ENCODE measurements at regions of chr18 and their contacts with region 1.

Region 1: GRCh38 chr18:67583621-67584020 is 67.1 kb upstream of the DSEL start:
- DNase-seq: no peak
- H3K4me3 ChIP-seq: no peak overlapping the region
- H3K27ac ChIP-seq: no peak overlapping the region
- H3K4me1 ChIP-seq: no peaks in the 10 kb centered on the region
- H3K27me3 ChIP-seq: no peaks in the 10 kb centered on the region
- CTCF ChIP-seq: no peak

Region 2: GRCh38 chr18:67282796-67283195 is 300.8 kb before region 1 on chr18:
- CTCF ChIA-PET with region 1: no interaction called
- POLR2A ChIA-PET with region 1: no interaction called
- intact Hi-C with region 1: no loop called
- DNase-seq: no peak
- H3K4me3 ChIP-seq: no peak overlapping the region
- H3K27ac ChIP-seq: no peak overlapping the region
- H3K4me1 ChIP-seq: peaks cover 6% of the 10 kb centered on the region
- H3K27me3 ChIP-seq: no peaks in the 10 kb centered on the region
- CTCF ChIP-seq: no peak

Region 3: GRCh38 chr18:67531929-67532328 is 51.7 kb before region 1 on chr18:
- CTCF ChIA-PET with region 1: no interaction called
- POLR2A ChIA-PET with region 1: no interaction called
- intact Hi-C with region 1: loop called (anchors 10 kb)
- DNase-seq: no peak
- H3K4me3 ChIP-seq: no peak overlapping the region
- H3K27ac ChIP-seq: no peak overlapping the region
- H3K4me1 ChIP-seq: peaks cover 12% of the 10 kb centered on the region
- H3K27me3 ChIP-seq: no peaks in the 10 kb centered on the region
- CTCF ChIP-seq: no peak

Region 4: DNA sequence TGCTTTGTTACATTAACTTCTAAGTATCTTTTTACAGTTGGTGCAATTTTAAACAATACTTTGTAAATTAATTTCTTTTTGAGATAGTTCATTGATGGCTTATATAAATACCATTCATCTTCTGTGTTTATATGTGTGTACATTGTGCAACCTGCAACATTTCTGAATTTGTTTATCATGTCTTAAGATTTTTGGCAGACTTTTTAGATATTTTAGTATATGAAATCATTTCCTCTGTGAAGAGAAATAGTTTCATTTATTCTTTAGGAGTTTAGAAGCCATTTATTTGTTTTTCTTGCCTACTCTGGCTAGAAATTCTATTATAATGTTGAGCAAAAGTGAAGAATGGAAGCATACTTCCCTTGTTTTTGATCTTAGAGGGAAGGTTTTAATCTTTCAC is 270.7 kb after region 1 on chr18:
- CTCF ChIA-PET with region 1: no interaction called
- POLR2A ChIA-PET with region 1: no interaction called
- intact Hi-C with region 1: loop called (anchors 10 kb)
- DNase-seq: no peak
- H3K4me3 ChIP-seq: no peak overlapping the region
- H3K27ac ChIP-seq: no peak overlapping the region
- H3K4me1 ChIP-seq: no peaks in the 10 kb centered on the region
- H3K27me3 ChIP-seq: no peaks in the 10 kb centered on the region
- CTCF ChIP-seq: no peak